Aorta (tissue), 5 donors: ENCODE measurements at regions of chr9 and their contacts with region 1.

Region 1: DNA sequence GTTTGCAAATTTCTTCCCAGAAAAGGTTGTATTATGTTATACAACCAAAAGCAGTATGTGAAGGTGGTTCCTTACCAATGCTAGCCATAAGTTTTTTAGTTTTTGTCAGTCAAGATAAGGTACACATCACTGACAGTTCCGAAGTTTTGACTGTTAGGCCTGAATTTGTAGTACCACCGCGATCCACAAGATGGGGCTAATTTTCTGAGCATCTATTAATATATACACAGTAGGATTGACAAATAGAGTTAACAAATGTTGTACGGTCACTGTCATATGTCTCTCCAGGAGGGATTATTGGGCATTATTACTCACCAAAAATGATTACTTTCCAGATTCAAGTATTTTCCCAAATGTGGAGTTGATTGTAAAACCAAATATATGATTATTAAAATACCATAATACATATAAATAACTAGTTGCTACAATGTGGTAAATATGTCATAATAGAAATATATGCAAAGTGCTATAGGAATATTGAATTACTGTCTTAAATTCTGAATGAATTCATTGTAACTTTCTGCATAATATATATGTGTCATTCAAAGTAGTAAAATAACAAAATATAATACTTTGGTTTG is 28.4 kb upstream of the LRRC19 start:
- DNase-seq: no peak
- ATAC-seq: peak; percentile 70
- H3K4me3 ChIP-seq: no peak overlapping the region
- H3K27ac ChIP-seq: no peak overlapping the region
- H3K4me1 ChIP-seq: no peaks in the 10 kb centered on the region
- H3K27me3 ChIP-seq: no peaks in the 10 kb centered on the region

Region 2: DNA sequence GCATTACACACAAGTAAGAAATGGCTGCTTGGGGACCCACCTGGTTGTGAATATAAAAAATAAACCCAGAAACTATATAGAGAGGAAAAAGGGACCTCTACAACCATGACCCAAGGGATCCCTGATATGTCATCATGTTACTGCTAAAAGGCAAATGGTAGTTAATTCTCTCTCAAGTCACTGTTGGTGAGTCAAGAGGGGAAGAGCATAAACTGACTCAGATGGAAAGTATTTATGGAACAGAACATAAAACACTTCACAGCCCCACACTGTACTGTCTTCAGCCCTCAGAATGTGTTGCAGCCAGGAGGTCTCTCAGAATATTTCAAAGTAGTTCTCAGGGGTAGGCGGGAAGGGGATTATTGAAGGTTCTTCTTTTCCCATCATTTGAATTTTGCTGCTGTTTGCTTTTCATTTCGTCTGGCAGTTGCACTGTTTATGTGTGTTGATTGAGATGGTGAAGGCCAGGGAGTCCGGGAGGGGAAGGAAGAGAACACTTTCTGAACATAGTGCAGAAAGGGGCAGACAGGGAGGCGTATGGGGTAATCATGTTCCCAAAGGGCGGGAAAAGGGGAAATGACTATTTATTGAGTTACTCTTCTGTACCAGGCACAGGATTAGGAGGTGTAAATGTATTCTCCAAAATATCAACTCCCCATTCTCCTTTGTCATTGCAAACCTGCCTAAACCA is 160.6 kb after region 1 on chr9:
- intact Hi-C with region 1: loop called in 1 of 2 experiments (anchors 10 kb)
- DNase-seq: peak in 1 of 2 donors; percentile 47
- ATAC-seq: peak; percentile 73
- H3K4me3 ChIP-seq: no peak overlapping the region
- H3K27ac ChIP-seq: peak overlapping the region; percentile 37 to 51
- H3K4me1 ChIP-seq: peaks cover 6 to 11% of the 10 kb centered on the region in 2 donors
- H3K27me3 ChIP-seq: no peaks in the 10 kb centered on the region

Region 3: GRCh38 chr9:27276193-27277030 is 242.5 kb after region 1 on chr9:
- intact Hi-C with region 1: loop called (anchors 1 to 2 kb)
- DNase-seq: no peak
- ATAC-seq: peak; percentile 81
- H3K4me3 ChIP-seq: peak overlapping the region; percentile 26 to 79
- H3K27ac ChIP-seq: no peak overlapping the region
- H3K4me1 ChIP-seq: no peaks in the 10 kb centered on the region
- H3K27me3 ChIP-seq: no peaks in the 10 kb centered on the region

Region 4: GRCh38 chr9:27548055-27548741 is 514.3 kb after region 1 on chr9:
- intact Hi-C with region 1: loop called in 1 of 2 experiments (anchors 10 kb)
- DNase-seq: no peak
- ATAC-seq: peak; percentile 89
- H3K4me3 ChIP-seq: no peak overlapping the region
- H3K27ac ChIP-seq: no peak overlapping the region
- H3K4me1 ChIP-seq: no peaks in the 10 kb centered on the region
- H3K27me3 ChIP-seq: no peaks in the 10 kb centered on the region